ENCODE measurements at regions of chr3 and their contacts with region 1.

Region 1: GRCh38 chr3:188316021-188316722 is 162.2 kb downstream of the LPP start:
- DNase-seq: no peak
- H3K4me3 ChIP-seq: no peak overlapping the region
- H3K27ac ChIP-seq: no peak overlapping the region
- H3K4me1 ChIP-seq: 0 out of 2 replicates have a peak, but pooled peaks cover 6% of the 10 kb centered on the region
- H3K27me3 ChIP-seq: no peaks in the 10 kb centered on the region
- CTCF ChIP-seq: no peak

Region 2: GRCh38 chr3:189071441-189071840 is 755.3 kb after region 1 on chr3:
- CTCF ChIA-PET with region 1: no interaction called
- POLR2A ChIA-PET with region 1: interaction called, 12 read pairs
- intact Hi-C with region 1: no loop called
- DNase-seq: peak in 1 of 2 experiments; percentile 77
- H3K4me3 ChIP-seq: no peak overlapping the region
- H3K27ac ChIP-seq: no peak overlapping the region
- H3K4me1 ChIP-seq: peaks cover 12% of the 10 kb centered on the region
- H3K27me3 ChIP-seq: no peaks in the 10 kb centered on the region
- CTCF ChIP-seq: no peak